Cardiac septum (tissue), 1 donor: ENCODE measurements at regions of chr3 and their contacts with region 1.

Region 1: GRCh38 chr3:153043729-153044328 is 118.2 kb upstream of the RAP2B start:
- DNase-seq: no peak

Region 2: GRCh38 chr3:152104847-152105415 is 938.9 kb before region 1 on chr3:
- intact Hi-C with region 1: no loop called
- DNase-seq: no peak

Region 3: GRCh38 chr3:153055779-153056178 is 11.9 kb after region 1 on chr3:
- intact Hi-C with region 1: no loop called
- DNase-seq: no peak

Region 4: DNA sequence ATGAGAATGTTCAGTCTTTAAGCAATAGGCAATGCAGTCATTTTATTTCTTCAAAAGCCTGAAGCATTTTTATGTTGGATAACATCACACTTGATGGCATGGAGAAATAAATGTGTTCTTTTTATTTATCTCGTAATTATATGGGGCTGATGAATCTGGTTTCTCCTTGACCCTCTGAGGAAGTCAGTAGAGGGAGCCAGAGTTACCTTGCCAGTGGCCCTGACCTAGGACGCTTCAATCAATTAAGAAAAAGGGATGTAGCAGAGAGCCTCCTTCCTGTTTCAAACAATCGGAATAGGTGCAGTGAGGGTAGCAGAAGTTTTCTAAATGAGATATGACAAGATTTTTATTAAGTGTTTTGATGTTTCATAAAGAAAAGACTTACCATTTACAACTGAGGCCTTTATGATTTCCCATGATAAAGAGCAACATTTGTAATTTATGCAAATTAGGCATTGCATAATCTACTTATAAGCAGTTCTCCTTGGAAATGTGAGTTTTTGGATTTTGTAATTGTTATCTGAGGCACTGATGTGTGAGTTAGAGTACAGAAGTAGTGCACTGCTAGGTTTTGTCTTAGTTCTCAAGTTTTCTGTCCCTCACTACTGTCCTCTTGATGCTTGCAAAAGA is 247.3 kb after region 1 on chr3:
- intact Hi-C with region 1: loop called (anchors 5 kb)
- DNase-seq: no peak

Region 5: GRCh38 chr3:153595186-153595815 is 551.5 kb after region 1 on chr3:
- intact Hi-C with region 1: loop called (anchors 5 kb)
- DNase-seq: no peak

Region 6: DNA sequence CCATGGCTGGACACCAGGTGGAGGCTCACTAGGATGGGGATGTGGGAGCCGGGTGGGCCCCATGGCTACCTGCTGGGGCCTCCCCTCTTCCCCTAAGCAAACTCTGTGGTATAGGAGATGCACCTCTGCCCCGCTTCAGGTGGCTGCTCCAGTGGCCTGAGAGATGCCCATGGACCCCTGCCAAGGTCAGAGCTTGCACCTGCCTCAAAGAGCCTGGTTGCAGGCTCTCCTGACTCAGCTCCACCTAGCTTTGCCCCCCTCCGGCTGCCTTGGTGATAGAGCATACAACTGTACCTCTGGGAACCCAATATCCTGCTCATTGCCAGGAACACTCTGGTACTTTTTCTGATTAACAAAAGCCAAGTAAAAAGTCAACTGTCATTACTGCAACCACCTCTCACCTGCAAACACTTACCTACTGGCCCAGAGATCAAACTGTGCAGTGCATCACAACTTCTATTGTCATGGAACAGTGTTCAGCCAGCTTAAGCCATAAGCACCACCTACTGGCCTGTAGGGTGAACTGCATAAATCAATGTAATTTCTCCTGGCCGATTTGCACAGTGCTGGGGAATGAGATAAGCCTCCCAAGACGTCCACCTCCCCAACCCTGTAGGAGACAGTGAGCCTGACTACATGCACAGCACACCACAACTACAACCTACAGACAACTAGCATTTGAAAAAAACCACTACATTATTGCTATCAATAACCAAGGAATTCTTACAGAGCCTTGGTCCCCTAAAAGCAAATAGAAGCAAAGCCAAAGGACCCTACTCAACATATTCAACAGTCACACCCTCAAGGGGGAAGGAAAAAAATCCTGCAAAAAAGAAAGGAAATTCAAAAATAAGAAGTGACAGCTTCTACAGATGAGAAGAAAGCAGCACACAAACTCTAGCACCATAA is 725.0 kb after region 1 on chr3:
- intact Hi-C with region 1: loop called (anchors 5 kb)
- DNase-seq: no peak